ENCODE measurements at regions of chr13 and their contacts with region 1.

Region 1: DNA sequence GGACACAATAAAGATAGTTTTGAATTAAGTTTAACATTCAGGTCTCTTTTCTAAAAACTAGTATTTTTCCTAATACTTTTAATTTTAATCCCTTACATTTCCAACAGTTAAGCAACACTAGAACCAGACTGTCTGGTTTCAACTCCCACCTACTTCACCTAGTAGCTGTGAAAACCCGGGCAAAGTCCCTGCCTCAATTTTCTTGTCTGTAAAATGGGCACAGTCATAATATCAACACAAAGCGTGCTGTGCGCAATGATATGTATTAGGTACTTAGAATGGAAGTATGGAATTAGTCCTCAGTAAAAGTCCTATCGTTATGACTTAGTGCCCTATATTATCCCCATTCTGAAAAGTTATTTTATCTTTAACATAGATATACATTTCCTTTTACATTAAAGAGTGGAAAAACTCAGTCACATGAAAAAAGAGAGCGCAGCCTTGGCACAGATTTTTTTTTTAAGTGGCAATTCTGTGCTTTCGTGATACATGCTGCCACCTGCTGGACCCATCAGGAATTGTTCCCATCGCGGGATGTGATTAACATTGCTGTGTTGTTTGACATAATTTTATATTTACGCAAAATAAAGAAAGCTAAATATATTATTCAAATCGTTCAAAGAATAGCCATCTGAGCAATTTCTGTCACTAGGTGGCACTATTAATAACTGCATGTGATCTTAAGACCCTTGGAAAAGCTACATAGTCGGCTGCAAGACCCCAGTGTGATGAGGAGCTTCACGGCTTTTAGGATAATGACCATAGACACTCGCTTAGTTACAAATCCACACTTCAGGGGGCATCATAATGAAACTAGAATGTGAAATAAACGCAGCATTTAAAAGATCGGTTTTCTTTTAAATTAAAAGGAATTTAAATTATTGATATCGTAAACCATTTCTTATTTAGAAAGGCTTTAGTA is 59.9 kb downstream of the LIG4 start:
- DNase-seq: no peak
- H3K4me3 ChIP-seq: no peak overlapping the region
- H3K27ac ChIP-seq: no peak overlapping the region
- H3K27me3 ChIP-seq: no peaks in the 10 kb centered on the region
- CTCF ChIP-seq: peak; percentile 83

Region 2: DNA sequence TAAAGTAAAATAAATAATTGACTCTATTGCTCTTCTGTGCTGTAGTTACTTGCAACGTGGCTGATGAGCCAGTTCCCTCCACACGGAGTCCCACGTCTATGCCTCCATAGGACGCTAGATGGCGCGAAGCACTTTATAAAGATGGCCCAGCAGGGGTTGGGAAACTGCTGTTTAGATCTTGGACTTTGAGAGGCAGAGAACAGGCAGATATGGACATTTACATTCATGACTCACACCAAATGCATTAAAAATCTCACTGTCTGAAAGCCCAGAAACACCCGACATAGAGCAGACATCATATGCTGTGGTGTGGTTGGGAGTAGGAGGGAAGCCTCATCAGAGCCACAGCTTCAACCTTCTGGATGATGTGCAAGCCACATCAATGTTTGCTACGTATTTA is 944.4 kb before region 1 on chr13:
- CTCF ChIA-PET with region 1: interaction called, 21 read pairs
- POLR2A ChIA-PET with region 1: no interaction called
- DNase-seq: peak; percentile 88
- H3K4me3 ChIP-seq: no peak overlapping the region
- H3K27ac ChIP-seq: no peak overlapping the region
- H3K27me3 ChIP-seq: no peaks in the 10 kb centered on the region
- CTCF ChIP-seq: peak; percentile 98

Region 3: GRCh38 chr13:107373551-107373950 is 781.9 kb before region 1 on chr13:
- CTCF ChIA-PET with region 1: interaction called, 11 read pairs
- POLR2A ChIA-PET with region 1: no interaction called
- DNase-seq: peak; percentile 65
- H3K4me3 ChIP-seq: no peak overlapping the region
- H3K27ac ChIP-seq: no peak overlapping the region
- H3K27me3 ChIP-seq: no peaks in the 10 kb centered on the region
- CTCF ChIP-seq: peak; percentile 72

Region 4: GRCh38 chr13:108166078-108166477 is 10.6 kb after region 1 on chr13:
- CTCF ChIA-PET with region 1: interaction called, 49 read pairs
- POLR2A ChIA-PET with region 1: no interaction called
- DNase-seq: no peak
- H3K4me3 ChIP-seq: no peak overlapping the region
- H3K27ac ChIP-seq: no peak overlapping the region
- H3K27me3 ChIP-seq: no peaks in the 10 kb centered on the region
- CTCF ChIP-seq: no peak

Measured in AG04450 (cell line).